GM18951 (cell line): ENCODE measurements at regions of chr1 and their contacts with region 1.

Region 1: DNA sequence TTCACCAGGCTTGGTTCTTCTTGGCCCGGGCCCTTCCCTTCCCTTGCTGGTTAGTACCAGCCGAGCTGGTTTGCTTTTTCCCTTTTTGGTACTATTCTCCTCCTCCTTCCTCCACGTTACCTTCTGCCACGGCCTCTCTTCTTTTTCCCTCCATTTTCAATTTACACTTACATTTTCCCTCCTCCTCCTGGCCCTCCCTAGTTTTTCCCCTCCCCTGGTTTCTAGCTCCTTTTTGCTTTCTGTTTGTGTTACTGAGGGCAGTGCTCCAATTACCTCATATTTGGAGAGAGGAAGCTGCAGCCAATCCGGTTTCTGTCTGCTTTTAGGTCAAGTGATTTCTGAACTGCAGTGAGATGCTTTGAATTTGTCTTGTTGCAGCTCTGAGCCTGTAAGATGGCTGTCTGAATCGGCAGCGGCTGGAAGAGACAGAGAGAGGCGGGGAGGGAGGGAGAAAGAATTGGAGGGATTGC is 63.7 kb downstream of the MACF1 start:
- POLR2A ChIP-seq: no peak

Region 2: GRCh38 chr1:38783640-38784229 is 484.4 kb before region 1 on chr1:
- in situ Hi-C with region 1: no loop called
- POLR2A ChIP-seq: no peak

Region 3: GRCh38 chr1:39110325-39110851 is 157.8 kb before region 1 on chr1:
- in situ Hi-C with region 1: loop called (anchors 10 kb)
- POLR2A ChIP-seq: no peak

Region 4: DNA sequence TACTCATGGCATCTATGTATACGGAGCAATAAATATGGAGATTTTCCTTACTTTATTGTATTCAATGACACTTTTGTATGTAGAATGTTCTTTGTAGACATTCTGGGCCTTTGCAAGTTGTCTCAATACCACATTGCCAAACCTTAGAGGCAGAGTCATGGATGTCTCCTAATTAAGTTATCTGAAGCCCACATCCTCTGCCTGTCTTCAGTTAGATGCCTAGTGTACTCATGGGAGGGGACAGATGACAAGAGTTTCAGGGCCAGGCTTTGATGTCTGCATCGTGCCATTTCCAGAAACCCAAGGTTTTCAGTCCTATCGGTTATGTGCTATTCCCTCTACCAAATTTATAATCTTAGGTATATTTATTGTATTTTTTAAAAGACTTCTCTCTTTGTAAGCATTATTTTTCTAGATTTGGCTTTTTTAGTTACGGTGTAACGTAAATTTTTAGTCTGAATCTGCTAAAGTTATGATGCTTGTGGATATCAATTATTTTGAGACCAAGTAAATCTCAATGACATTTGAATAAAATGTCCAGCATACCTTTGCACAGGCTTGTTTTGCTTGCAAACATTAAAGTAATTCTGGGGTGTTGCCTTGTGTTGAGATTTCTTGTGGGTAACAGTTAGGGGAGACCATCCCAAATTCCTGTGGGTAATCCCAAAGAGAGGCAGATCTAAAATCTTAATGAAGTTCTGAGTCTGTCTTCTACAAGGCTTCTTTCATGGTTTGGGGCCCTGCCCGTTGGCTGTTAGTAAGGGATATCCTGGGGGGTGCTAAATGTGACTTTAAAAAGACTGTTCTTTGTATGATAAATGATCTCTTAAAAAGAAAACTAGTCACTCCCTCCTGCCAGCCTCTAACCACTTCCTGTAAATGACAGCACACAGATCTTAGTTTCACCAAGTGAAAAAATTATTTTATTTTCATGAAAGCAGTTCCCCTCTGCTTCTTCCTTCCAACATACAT is 71.6 kb before region 1 on chr1:
- in situ Hi-C with region 1: loop called (anchors 10 kb)
- POLR2A ChIP-seq: no peak

Region 5: DNA sequence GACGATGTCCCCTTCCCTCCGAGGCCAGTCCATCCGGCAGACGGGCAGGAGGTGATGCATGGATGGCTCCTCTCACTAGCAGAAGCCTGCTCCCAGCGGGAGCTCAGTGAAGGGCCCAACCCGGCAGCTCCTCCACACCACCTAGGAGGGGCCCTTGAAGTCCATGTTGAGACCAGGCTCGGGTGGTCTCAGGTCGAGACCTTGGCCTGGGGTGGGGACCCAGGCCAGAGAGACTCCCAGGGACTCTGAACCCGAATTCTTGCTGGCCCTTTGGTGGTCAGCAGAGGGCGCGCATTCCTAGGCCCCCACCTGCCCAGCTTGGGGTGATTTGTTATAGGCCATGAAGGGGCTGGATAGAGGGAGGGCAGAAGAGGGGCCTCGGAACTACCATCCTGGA is 404.4 kb after region 1 on chr1:
- in situ Hi-C with region 1: no loop called
- POLR2A ChIP-seq: no peak